Calu3 (cell line): ENCODE measurements at regions of chr10 and their contacts with region 1.

Region 1: DNA sequence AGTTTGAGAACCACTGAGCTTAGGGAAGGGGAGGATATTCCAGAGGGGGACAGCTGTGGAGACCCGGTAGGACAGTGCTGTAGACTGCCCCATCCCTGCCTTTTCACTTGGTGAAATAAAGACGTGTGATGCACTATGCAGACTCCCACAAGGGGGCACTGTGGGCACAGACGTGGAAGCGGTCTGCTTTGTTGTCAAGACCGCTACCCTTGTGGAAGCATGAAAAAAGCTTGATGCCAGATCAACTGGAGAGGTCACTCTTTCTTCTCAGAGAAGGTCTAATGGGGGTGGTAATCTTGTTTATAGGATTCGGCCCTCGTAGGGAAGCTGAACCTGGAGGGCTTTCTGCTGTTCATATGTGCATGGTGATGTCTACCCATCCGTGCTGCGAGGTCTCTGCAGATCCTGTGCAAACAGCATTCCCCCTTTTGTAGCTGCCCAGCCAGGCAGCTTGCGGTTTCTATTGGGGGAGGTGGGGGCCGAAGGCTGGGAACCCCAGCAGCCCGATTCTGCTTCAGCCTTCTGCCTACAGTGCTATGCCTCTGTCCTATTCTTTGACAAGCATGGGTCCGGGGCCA is 13.7 kb downstream of the RPS24 start:
- DNase-seq: peak; percentile 93
- H3K4me3 Mint-ChIP-seq: no peak overlapping the region
- H3K27ac Mint-ChIP-seq: no peak overlapping the region
- H3K4me1 Mint-ChIP-seq: no peaks in the 10 kb centered on the region
- H3K27me3 Mint-ChIP-seq: no peaks in the 10 kb centered on the region
- CTCF ChIP-seq: peak; percentile 96

Region 2: DNA sequence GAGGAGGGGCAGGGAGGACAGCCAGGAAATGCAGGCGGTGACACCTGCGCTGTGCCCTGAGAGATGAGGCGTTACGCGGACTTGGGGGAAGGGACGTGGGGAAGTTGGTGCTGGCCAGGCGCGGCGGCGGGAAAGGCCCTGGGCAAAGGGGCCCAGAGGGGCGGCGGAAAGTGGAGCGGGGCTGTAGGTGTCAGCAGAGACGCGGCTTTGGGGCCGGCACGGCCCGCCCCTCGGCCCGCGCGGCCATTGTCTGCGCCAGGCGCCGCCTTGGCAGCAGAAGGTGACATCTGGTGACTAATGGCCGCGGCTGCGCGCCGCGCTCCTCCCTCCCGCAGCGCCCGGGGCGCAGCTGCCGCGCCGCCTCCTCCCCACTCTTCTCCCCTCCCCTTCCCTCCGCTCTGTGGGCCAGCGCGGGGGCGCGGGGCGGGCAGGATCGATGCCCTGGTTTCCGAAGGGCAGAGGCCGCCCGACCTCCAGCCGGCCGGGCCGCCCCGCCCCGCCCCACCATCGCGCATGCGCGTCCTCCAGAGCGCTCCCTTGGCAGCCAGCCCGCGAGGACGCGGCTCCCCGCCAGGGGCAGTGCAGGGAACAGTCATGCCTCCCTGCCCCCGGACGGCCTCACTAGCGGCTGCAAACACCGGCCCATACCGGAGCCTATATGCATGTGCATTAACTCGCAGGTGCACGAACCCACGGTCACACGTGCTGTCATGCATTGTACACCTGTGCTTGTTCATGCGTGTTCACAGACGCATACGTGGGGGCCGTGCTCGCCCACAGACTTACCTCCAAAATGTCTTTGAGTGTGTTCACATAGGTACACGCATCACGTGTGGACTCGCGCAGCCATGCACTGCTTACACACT is 255.8 kb after region 1 on chr10:
- CTCF ChIA-PET with region 1: interaction called, 6 read pairs
- intact Hi-C with region 1: loop called (anchors 2 kb)
- DNase-seq: peak; percentile 98
- H3K4me3 Mint-ChIP-seq: peak overlapping the region; percentile 92
- H3K27ac Mint-ChIP-seq: peak overlapping the region; percentile 75
- H3K4me1 Mint-ChIP-seq: peaks cover 7% of the 10 kb centered on the region
- H3K27me3 Mint-ChIP-seq: peaks cover 35% of the 10 kb centered on the region
- CTCF ChIP-seq: peak; percentile 79

Region 3: GRCh38 chr10:78407009-78407711 is 359.8 kb after region 1 on chr10:
- CTCF ChIA-PET with region 1: no interaction called
- intact Hi-C with region 1: loop called (anchors 10 kb)
- DNase-seq: peak; percentile 91
- H3K4me3 Mint-ChIP-seq: peak overlapping the region; percentile 62
- H3K27ac Mint-ChIP-seq: peak overlapping the region; percentile 59
- H3K4me1 Mint-ChIP-seq: peaks cover 7% of the 10 kb centered on the region
- H3K27me3 Mint-ChIP-seq: peaks cover 94% of the 10 kb centered on the region
- CTCF ChIP-seq: no peak

Region 4: GRCh38 chr10:78520737-78521430 is 473.5 kb after region 1 on chr10:
- CTCF ChIA-PET with region 1: no interaction called
- intact Hi-C with region 1: loop called (anchors 10 kb)
- DNase-seq: peak; percentile 70
- H3K4me3 Mint-ChIP-seq: no peak overlapping the region
- H3K27ac Mint-ChIP-seq: no peak overlapping the region
- H3K4me1 Mint-ChIP-seq: peaks cover 15% of the 10 kb centered on the region
- H3K27me3 Mint-ChIP-seq: peaks cover 71% of the 10 kb centered on the region
- CTCF ChIP-seq: peak; percentile 62